Naive thymus-derived CD8-positive, alpha-beta T cell (primary cell): ENCODE measurements at regions of chr4 and their contacts with region 1.

Region 1: GRCh38 chr4:2262143-2262943 is 434 bp upstream of the MXD4 start:
- DNase-seq: peak; percentile 94 to 99 (median 97)
- ATAC-seq: peak; percentile 89 to 90
- H3K4me3 Mint-ChIP-seq: peak overlapping the region; percentile 64 to 87 (median 74)
- H3K27ac Mint-ChIP-seq: peak overlapping the region in 8 of 10 donors; percentile 41 to 95 (median 88)
- H3K4me1 Mint-ChIP-seq: peaks cover 0 to 13% (median 4%) of the 10 kb centered on the region in 4 donors
- H3K27me3 Mint-ChIP-seq: no peaks in the 10 kb centered on the region

Region 2: DNA sequence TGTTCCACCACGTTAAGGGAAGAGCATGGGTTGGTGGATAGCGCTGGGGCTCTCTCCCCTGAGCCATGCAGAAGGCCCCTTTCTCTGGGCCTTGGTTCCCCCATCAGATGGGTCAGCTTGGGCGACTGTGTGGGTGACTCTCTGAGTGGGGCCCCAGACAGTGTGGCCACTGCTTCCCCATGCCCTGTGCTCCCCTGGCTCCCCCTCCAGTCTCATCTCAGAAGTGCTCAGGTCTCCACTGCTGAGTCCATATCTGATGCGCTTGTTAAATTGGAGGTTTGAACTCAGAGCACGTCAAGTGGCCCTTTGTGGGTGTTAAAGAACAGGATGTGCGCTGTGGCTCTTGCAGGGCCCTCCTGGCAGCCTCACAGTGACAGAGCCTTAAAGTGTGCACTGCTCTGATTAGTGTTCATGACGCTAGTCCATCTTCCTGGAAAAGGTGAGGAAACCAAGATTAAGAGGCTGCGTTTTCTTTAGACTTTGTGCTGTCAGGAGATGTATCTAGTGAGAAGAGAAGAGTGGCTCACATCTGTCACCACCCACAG is 313.4 kb before region 1 on chr4:
- POLR2A ChIA-PET with region 1: no interaction called
- DNase-seq: no peak
- ATAC-seq: no peak
- H3K4me3 Mint-ChIP-seq: no peak overlapping the region
- H3K27ac Mint-ChIP-seq: peak overlapping the region in 2 of 10 donors; percentile 12 to 65
- H3K4me1 Mint-ChIP-seq: peaks cover 0 to 2% (median 1%) of the 10 kb centered on the region in 4 donors
- H3K27me3 Mint-ChIP-seq: no peaks in the 10 kb centered on the region

Region 3: GRCh38 chr4:2226261-2226660 is 36.1 kb before region 1 on chr4:
- POLR2A ChIA-PET with region 1: no interaction called
- DNase-seq: no peak
- ATAC-seq: no peak
- H3K4me3 Mint-ChIP-seq: no peak overlapping the region
- H3K27ac Mint-ChIP-seq: peak overlapping the region in 3 of 10 donors; percentile 31 to 51 (median 49)
- H3K4me1 Mint-ChIP-seq: peaks cover 0 to 4% (median 1%) of the 10 kb centered on the region in 4 donors
- H3K27me3 Mint-ChIP-seq: no peaks in the 10 kb centered on the region

Region 4: DNA sequence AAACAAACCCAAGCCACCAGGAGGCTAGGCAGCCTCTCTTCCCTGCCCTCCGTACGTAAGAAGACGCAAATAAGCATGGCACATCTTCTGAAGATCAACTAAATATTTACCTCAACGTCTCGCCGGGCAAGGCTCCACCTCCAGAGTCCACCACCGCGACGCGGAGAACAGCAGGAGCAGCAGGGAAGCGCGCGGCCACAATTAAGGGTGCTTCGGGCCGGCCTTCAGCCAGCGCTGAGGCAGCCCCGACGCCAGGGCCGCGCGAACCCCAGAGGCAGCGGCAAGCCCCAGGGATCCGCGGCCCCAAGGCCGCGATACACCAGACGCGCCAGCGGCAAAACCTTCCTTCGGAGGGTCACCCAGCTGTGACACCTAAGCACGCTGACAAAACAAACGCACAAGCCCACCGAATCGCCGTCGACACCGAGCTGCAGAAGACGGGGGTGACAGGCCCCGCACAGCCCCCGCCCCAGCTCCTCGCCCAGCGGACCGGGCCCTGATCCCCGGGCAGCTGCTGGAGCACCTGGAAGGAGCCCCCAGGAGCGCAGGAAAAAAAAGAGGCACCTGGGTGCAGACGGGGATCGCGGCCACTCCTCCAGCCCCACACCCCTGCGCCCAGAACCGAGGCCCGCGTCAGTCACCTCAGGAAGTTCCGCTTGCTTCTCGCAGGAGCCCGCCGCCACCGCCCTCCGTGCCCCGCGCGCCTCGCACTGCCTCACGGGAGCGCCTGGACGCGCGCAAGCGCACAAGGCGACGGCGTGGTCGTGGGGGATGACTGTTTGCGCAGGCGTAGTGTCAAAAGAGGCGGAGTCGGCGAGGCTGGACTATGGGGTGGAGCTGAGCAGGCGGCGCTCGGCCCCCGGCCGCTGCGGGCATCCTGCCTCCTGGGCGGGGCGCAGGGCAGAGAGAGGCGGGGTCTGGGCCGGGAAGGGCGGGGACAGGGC is 20.7 kb before region 1 on chr4 and contains the starts of genes HAUS3 and POLN:
- POLR2A ChIA-PET with region 1: interaction called, 31 read pairs
- DNase-seq: peak; percentile 96 to 100 (median 99)
- ATAC-seq: peak; percentile 86 to 87
- H3K4me3 Mint-ChIP-seq: peak within 1 kb of the TSS; percentile 85 to 96 (median 90)
- H3K27ac Mint-ChIP-seq: peak within 1 kb of the TSS; percentile 83 to 97 (median 94)
- H3K4me1 Mint-ChIP-seq: peaks cover 36 to 73% (median 63%) of the 10 kb centered on the region in 4 donors
- H3K27me3 Mint-ChIP-seq: no peaks in the 10 kb centered on the region
- polyA plus RNA-seq, gene HAUS3: 16.3 to 22.2 (median 18.8) TPM
- polyA plus RNA-seq, gene POLN: 0.44 to 0.55 TPM in 2 of 3 donors, not detected in the other

Region 5: DNA sequence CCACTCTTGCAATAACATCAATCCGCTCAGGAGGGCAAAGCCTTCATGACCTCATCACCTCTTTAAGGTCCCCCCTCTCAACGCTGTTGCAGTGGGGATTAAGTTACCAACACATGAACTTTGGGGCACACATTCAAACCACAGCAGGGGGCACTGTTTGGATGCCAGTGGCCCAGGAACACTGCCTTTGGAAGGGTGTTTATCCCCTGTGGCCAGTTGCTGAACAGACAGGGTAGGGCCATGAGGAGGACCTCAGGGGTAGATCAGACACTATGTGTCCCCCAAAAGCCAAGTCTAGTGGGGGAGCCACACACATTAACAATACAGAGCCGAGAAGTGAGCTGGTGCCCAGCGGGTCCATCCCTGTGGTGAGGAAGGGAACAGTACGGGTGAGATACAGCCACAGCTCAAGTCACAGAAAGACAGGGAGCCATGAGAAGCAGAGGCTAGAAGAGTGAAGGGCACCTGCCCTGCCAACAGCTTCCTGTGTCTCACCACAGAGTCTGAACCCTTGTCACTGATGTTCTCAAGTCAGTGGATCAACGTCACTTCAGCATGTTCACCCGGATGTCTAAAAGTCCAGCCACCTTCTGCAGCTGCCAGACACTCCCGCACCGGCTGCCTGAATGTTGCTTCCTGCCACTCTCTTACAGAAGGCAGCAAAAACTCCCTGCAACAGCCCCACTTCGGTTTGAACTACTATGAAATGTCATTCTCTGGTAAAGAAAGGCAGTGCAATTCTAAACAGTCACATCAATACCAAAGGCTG is 19.4 kb after region 1 on chr4:
- POLR2A ChIA-PET with region 1: interaction called, 36 read pairs
- DNase-seq: peak; percentile 64 to 94 (median 91)
- ATAC-seq: peak; percentile 91 to 92
- H3K4me3 Mint-ChIP-seq: peak overlapping the region; percentile 55 to 91 (median 82)
- H3K27ac Mint-ChIP-seq: peak overlapping the region; percentile 98 to 100 (median 99)
- H3K4me1 Mint-ChIP-seq: peaks cover 19 to 47% (median 43%) of the 10 kb centered on the region in 4 donors
- H3K27me3 Mint-ChIP-seq: no peaks in the 10 kb centered on the region

Region 6: GRCh38 chr4:2290974-2291704 is 28.8 kb after region 1 on chr4:
- POLR2A ChIA-PET with region 1: interaction called, 40 read pairs
- DNase-seq: peak; percentile 57 to 92 (median 89)
- ATAC-seq: peak; percentile 94 to 95
- H3K4me3 Mint-ChIP-seq: peak overlapping the region; percentile 65 to 84 (median 82)
- H3K27ac Mint-ChIP-seq: peak overlapping the region; percentile 98 to 99 (median 99)
- H3K4me1 Mint-ChIP-seq: peaks cover 21 to 65% (median 54%) of the 10 kb centered on the region in 4 donors
- H3K27me3 Mint-ChIP-seq: peaks cover 0 to 2% (median 0%) of the 10 kb centered on the region in 5 donors

Region 7: GRCh38 chr4:2296631-2297601 is 34.6 kb after region 1 on chr4:
- POLR2A ChIA-PET with region 1: interaction called, 40 read pairs
- DNase-seq: peak in 7 of 10 donors; percentile 35 to 57 (median 53)
- ATAC-seq: peak; percentile 77 to 83
- H3K4me3 Mint-ChIP-seq: peak overlapping the region; percentile 61 to 89 (median 82)
- H3K27ac Mint-ChIP-seq: peak overlapping the region; percentile 79 to 97 (median 94)
- H3K4me1 Mint-ChIP-seq: peaks cover 28 to 65% (median 56%) of the 10 kb centered on the region in 4 donors
- H3K27me3 Mint-ChIP-seq: no peaks in the 10 kb centered on the region

Region 8: GRCh38 chr4:2412885-2413716 is 150.8 kb after region 1 on chr4:
- POLR2A ChIA-PET with region 1: interaction called, 20 read pairs
- DNase-seq: peak; percentile 55 to 94 (median 88)
- ATAC-seq: peak; percentile 74 to 79
- H3K4me3 Mint-ChIP-seq: peak overlapping the region; percentile 69 to 88 (median 82)
- H3K27ac Mint-ChIP-seq: peak overlapping the region; percentile 91 to 99 (median 96)
- H3K4me1 Mint-ChIP-seq: peaks cover 33 to 72% (median 68%) of the 10 kb centered on the region in 4 donors
- H3K27me3 Mint-ChIP-seq: peaks cover 0 to 14% (median 5%) of the 10 kb centered on the region in 5 donors

Region 9: GRCh38 chr4:2468445-2469192 is 206.3 kb after region 1 on chr4 and contains the start of gene RNF4:
- POLR2A ChIA-PET with region 1: interaction called, 14 read pairs
- DNase-seq: peak; percentile 85 to 97 (median 94)
- ATAC-seq: peak; percentile 83 to 85
- H3K4me3 Mint-ChIP-seq: peak within 1 kb of the TSS; percentile 92 to 98 (median 96)
- H3K27ac Mint-ChIP-seq: peak within 1 kb of the TSS; percentile 93 to 99 (median 98)
- H3K4me1 Mint-ChIP-seq: peaks cover 23 to 59% (median 49%) of the 10 kb centered on the region in 4 donors
- H3K27me3 Mint-ChIP-seq: no peaks in the 10 kb centered on the region
- polyA plus RNA-seq, gene RNF4: 59.8 to 88.3 (median 73.3) TPM

Region 10: DNA sequence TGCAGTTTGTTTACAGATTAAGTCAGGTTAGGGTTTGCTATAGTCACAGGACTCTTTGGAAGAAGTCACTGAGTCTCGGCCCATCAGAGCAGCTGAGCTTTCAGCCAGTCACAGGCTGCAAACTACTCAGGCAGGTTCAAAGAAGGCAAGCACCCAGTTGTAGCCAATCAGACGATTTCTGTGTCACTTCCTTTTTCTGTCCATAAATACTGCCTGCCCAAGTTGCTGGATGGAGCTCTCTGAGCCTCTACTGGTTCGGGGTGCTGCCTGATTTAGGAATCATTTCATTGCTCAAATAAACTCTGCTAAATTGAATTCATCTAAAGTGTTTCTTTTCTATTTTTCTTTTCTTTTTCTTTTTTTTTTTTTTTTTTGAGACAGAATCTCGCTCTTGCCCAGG is 523.3 kb after region 1 on chr4:
- POLR2A ChIA-PET with region 1: no interaction called
- DNase-seq: peak in 4 of 10 donors; percentile 24 to 51 (median 42)
- ATAC-seq: peak; percentile 55 to 60
- H3K4me3 Mint-ChIP-seq: peak overlapping the region in 3 of 10 donors; percentile 71 to 75 (median 71)
- H3K27ac Mint-ChIP-seq: peak overlapping the region; percentile 84 to 95 (median 92)
- H3K4me1 Mint-ChIP-seq: peaks cover 16 to 54% (median 46%) of the 10 kb centered on the region in 4 donors
- H3K27me3 Mint-ChIP-seq: no peaks in the 10 kb centered on the region